Esophagus squamous epithelium (tissue), 5 donors: ENCODE measurements at regions of chr1 and their contacts with region 1.

Region 1: DNA sequence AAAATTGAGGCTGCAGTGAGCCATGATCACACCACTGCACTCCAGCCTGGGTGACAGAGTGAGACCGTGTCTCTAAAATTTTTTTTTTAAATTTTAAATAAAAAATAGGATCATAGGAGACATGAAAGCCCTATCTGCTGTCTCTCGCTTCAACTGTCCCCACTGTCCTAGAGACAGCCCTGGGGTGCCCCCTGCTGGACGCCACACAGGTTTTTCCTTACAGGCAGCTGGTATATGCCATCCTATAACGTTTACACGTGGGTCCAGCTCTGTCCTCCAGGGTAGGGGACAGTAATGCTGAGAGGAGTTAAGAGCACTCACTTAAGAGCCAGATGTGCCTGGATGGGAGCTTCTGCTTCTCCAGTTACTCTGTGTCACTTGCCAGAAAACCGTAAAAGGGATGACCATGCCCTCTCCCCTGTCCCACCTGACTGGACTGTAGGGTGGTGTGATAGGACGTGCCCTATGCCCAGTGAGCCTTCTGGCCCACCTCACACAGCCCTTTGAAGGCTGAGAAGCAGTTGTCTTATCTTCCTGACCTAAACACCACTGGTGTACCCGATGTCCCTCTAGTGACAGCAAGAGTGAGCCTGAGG is 8.5 kb downstream of the FBXO2 start:
- DNase-seq: no peak
- H3K4me3 ChIP-seq: no peak overlapping the region
- H3K27ac ChIP-seq: no peak overlapping the region
- H3K4me1 ChIP-seq: peaks cover 0 to 31% (median 15%) of the 10 kb centered on the region in 3 donors
- H3K27me3 ChIP-seq: peaks cover 0 to 60% (median 0%) of the 10 kb centered on the region in 4 donors
- CTCF ChIP-seq: peak; percentile 39 to 75 (median 67)
- POLR2A ChIP-seq: no peak

Region 2: GRCh38 chr1:11037740-11038182 is 608.0 kb before region 1 on chr1:
- intact Hi-C with region 1: loop called (anchors 10 kb)
- DNase-seq: no peak
- H3K4me3 ChIP-seq: no peak overlapping the region
- H3K27ac ChIP-seq: no peak overlapping the region
- H3K4me1 ChIP-seq: peaks cover 0 to 9% (median 0%) of the 10 kb centered on the region in 3 donors
- H3K27me3 ChIP-seq: peaks cover 0 to 14% (median 0%) of the 10 kb centered on the region in 4 donors
- CTCF ChIP-seq: peak; percentile 89 to 97 (median 94)
- POLR2A ChIP-seq: no peak

Region 3: DNA sequence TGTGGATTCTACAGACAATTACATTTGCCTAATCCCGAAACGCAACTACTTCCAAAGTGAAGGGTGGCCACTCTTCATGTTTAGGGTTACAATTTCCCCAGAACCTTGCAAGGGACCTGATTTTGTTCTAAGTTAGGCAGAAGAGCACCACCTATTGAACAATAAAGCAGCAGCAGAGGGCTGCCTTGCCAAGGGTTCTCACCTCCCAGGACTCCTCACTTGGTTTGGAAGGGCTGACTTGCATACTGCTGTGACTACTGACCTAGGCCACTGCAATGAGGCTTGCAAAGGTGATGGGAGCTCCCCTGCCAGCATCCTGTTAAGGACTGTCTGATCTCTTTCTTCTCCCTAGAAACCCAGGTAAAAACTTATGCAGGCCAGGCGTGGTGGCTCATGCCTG is 397.6 kb before region 1 on chr1:
- intact Hi-C with region 1: loop called (anchors 5 kb)
- DNase-seq: no peak
- H3K4me3 ChIP-seq: no peak overlapping the region
- H3K27ac ChIP-seq: no peak overlapping the region
- H3K4me1 ChIP-seq: no peaks in the 10 kb centered on the region
- H3K27me3 ChIP-seq: no peaks in the 10 kb centered on the region
- CTCF ChIP-seq: no peak
- POLR2A ChIP-seq: no peak

Region 4: GRCh38 chr1:11681071-11681771 is 35.5 kb after region 1 on chr1 and contains the start of gene MAD2L2:
- intact Hi-C with region 1: no loop called
- DNase-seq: no peak
- H3K4me3 ChIP-seq: peak within 1 kb of the TSS; percentile 76 to 93 (median 86)
- H3K27ac ChIP-seq: peak within 1 kb of the TSS; percentile 82 to 97 (median 88)
- H3K4me1 ChIP-seq: peaks cover 4 to 37% (median 13%) of the 10 kb centered on the region in 3 donors
- H3K27me3 ChIP-seq: peaks cover 0 to 32% (median 1%) of the 10 kb centered on the region in 4 donors
- CTCF ChIP-seq: no peak
- POLR2A ChIP-seq: peak in 2 of 4 donors; percentile 48 to 69
- total RNA-seq, gene MAD2L2: 12.1 to 22.8 (median 18.9) TPM

Region 5: DNA sequence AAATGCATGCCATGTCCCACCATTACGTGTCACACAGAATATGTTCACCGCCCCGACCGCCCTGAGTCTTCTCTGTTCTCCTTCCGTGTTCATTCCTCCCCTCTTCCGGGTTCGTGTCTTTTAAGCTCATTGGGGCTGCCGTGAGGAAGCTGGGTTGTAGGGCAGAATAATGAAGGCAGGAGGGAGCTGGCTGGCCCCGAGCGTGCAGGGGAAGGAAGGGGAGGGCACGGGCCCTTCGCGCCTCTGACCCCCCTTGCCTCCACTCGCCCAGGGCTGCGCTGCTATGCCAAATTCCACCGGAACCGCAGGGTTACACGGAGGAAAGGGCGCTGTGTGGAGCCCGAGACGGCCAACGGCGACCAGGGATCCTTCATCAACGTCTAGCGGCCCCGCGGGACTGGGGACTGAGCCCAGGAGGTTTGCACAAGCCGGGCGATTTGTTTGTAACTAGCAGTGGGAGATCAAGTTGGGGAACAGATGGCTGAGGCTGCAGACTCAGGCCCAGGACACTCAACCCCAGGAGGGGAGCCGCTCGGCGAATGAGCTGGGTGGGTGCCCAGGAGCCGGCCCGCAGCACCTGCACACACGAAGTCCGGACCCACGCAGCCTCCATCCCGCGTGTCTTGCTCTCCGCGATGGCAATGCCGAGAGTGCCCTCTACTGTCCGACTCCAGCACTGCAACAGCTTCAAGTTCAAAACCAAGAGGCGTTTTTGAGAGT is 73.7 kb after region 1 on chr1:
- intact Hi-C with region 1: loop called (anchors 5 kb)
- DNase-seq: peak; percentile 37
- H3K4me3 ChIP-seq: peak overlapping the region; percentile 24 to 66 (median 49)
- H3K27ac ChIP-seq: peak overlapping the region; percentile 32 to 82 (median 71)
- H3K4me1 ChIP-seq: peaks cover 0 to 17% (median 7%) of the 10 kb centered on the region in 3 donors
- H3K27me3 ChIP-seq: peaks cover 0 to 13% (median 0%) of the 10 kb centered on the region in 4 donors
- CTCF ChIP-seq: peak; percentile 80 to 97 (median 94)
- POLR2A ChIP-seq: no peak